Ascending aorta (tissue), 2 donors: ENCODE measurements at regions of chr20 and their contacts with region 1.

Region 1: DNA sequence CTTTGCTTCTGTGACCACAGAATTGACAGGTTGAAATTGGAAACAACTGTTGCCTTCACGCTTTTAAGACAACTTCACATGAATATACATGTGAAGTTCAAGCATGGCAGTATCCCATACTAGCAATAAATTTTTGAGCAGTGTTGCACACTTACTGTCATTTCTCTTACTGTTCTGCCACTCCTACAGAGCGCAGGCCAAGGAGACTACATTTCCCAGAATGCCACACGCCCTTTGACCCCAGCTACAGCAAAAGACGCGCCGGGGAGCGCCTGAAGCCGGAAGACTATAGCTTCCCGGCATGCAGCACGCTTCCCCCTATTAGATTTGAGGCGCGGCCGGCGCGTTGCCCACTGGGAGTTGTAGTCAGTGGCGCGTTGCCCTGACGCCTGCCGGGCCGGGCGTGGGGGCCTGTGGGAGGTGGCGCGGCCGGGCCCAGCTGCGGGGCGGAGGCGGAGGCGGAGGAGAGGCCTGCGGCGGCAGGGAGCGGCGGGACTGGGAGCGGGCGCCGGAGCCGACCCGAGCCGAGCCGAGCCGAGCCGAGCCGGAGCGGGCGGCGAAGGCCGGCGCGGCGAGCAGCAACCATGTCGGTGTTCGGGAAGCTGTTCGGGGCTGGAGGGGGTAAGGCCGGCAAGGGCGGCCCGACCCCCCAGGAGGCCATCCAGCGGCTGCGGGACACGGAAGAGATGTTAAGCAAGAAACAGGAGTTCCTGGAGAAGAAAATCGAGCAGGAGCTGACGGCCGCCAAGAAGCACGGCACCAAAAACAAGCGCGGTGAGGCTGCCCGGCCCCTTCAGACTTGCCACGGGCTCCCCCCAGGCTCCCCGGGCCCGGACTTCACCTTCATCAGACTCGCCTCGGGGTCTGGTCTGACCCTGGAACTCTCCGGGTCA is at the start of gene CHMP4B:
- DNase-seq: peak; percentile 98 to 100
- H3K4me3 ChIP-seq: peak within 1 kb of the TSS; percentile 94 to 99
- H3K27ac ChIP-seq: peak within 1 kb of the TSS; percentile 94 to 98
- H3K4me1 ChIP-seq: peaks cover 4 to 24% of the 10 kb centered on the region in 2 donors
- H3K27me3 ChIP-seq: no peaks in the 10 kb centered on the region
- CTCF ChIP-seq: no peak
- total RNA-seq, gene CHMP4B: 42.8 TPM

Region 2: DNA sequence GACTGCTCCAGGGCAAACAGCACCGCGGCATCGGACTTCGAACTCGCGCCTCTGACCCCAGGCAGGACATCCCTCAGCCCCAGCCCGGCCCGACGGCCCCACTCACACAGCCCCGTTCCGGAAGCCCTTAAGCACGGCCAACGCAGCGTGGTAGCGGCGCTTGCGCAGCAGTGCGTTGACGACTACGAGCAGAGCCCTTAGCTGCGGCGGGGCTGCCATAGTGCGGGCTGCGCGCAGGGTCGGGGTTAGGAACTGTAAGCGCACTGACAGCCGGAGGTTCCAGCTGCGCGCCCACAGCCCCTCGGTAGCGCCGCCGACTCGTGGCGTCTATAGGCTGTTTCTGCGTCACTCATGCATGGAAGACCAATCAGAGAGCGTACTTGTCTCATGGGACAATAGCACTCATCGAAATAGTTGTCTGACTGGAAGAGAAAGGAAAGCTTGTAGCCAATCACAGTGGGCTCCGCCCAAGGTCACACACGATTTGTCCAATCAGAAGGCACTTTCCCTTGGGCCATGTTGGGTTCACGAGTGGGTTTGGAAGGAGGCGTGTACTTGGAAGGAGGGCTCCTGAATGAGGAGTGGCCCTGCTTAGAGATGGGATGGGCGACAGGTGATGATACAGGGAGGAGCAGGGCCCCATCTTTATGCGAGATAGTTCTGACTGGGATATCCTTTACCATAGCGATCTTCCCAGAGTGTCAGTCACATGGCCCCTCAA is 91.0 kb before region 1 on chr20 and contains the start of gene PXMP4:
- intact Hi-C with region 1: no loop called
- DNase-seq: peak; percentile 83 to 97
- H3K4me3 ChIP-seq: peak within 1 kb of the TSS; percentile 64 to 92
- H3K27ac ChIP-seq: peak within 1 kb of the TSS; percentile 68 to 76
- H3K4me1 ChIP-seq: peaks cover 3 to 7% of the 10 kb centered on the region in 2 donors
- H3K27me3 ChIP-seq: no peaks in the 10 kb centered on the region
- CTCF ChIP-seq: no peak
- total RNA-seq, gene PXMP4: 38.0 TPM

Region 3: DNA sequence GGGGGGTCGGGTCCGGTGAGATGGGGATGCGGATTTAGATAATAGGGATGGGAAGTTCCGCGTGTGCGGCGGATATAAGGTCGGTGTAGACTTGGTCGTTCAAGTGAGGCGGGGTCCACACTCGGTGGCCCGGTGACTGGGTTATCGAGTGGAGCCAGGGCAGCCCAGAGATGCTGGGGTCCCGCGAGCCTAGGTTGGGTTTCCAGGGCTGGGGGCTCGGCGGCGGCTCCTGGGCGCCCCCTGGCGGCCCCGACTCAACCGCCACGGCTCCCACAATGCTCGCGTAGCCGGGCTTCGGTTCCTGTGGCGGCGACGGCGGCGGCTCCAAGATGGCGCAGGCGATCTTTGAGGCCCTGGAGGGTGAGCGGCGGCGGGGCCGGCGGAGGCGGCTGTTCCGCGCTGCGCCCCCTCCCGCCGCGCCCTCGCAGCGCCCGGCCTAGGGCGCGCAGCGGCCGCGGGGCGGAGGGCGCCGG is 79.4 kb before region 1 on chr20 and contains the start of gene ZNF341:
- intact Hi-C with region 1: loop called (anchors 5 kb)
- DNase-seq: peak; percentile 29 to 92
- H3K4me3 ChIP-seq: peak within 1 kb of the TSS; percentile 73 to 81
- H3K27ac ChIP-seq: peak within 1 kb of the TSS; percentile 74 to 84
- H3K4me1 ChIP-seq: peaks cover 0 to 9% of the 10 kb centered on the region in 2 donors
- H3K27me3 ChIP-seq: no peaks in the 10 kb centered on the region
- CTCF ChIP-seq: peak; percentile 91
- total RNA-seq, gene ZNF341: 4.5 TPM

Region 4: DNA sequence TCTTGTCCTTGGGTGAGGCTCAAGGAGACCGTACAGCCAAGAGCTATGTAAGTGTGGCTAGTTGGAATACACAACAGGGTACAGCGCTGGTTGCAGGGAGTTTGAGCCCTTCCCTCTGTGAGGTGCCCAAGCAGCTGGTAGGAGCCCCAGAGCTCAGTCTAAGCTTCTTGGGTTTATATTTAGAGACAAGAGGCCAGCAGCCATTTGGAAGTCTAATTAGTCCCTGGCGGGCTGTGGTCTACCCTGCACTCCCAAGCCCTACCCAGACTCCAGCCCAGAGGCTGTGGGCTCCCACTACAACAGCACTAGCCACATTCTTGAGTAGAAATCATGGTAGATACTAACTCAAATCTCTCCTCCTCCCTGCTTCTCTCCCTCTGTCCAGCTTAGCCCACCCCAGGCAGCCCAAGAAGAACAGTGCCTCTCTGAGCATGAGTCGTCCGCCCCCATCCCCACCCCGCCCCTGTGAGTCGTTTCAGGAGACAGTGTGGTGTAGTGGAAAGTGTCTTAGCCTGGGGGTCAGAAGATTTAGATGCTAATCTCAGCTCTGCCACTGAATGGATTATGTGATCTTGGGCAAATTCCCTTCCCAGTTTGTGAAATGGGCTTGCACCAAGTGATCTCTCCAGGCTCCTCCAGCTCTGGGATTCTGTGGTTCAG is 263.1 kb after region 1 on chr20:
- intact Hi-C with region 1: no loop called
- DNase-seq: no peak
- H3K4me3 ChIP-seq: no peak overlapping the region
- H3K27ac ChIP-seq: no peak overlapping the region
- H3K4me1 ChIP-seq: peaks cover 4 to 5% of the 10 kb centered on the region in 2 donors
- H3K27me3 ChIP-seq: no peaks in the 10 kb centered on the region
- CTCF ChIP-seq: no peak

Region 5: GRCh38 chr20:34111702-34112599 is 300.8 kb after region 1 on chr20 and contains the start of gene EIF2S2:
- intact Hi-C with region 1: loop called (anchors 1 kb)
- DNase-seq: peak; percentile 87 to 97
- H3K4me3 ChIP-seq: peak within 1 kb of the TSS; percentile 79 to 95
- H3K27ac ChIP-seq: peak within 1 kb of the TSS; percentile 94 to 99
- H3K4me1 ChIP-seq: peaks cover 0 to 23% of the 10 kb centered on the region in 2 donors
- H3K27me3 ChIP-seq: no peaks in the 10 kb centered on the region
- CTCF ChIP-seq: no peak
- total RNA-seq, gene EIF2S2: 19.3 TPM

Region 6: GRCh38 chr20:34302723-34303528 is 491.8 kb after region 1 on chr20 and contains the start of gene AHCY:
- intact Hi-C with region 1: loop called (anchors 5 kb)
- DNase-seq: peak; percentile 88 to 98
- H3K4me3 ChIP-seq: peak within 1 kb of the TSS; percentile 60 to 90
- H3K27ac ChIP-seq: peak within 1 kb of the TSS; percentile 94 to 95
- H3K4me1 ChIP-seq: peaks cover 0 to 6% of the 10 kb centered on the region in 2 donors
- H3K27me3 ChIP-seq: no peaks in the 10 kb centered on the region
- CTCF ChIP-seq: peak in 1 of 3 experiments; percentile 28
- total RNA-seq, gene AHCY: 93.8 TPM